B cell (primary cell): ENCODE measurements at regions of chr5 and their contacts with region 1.

Region 1: DNA sequence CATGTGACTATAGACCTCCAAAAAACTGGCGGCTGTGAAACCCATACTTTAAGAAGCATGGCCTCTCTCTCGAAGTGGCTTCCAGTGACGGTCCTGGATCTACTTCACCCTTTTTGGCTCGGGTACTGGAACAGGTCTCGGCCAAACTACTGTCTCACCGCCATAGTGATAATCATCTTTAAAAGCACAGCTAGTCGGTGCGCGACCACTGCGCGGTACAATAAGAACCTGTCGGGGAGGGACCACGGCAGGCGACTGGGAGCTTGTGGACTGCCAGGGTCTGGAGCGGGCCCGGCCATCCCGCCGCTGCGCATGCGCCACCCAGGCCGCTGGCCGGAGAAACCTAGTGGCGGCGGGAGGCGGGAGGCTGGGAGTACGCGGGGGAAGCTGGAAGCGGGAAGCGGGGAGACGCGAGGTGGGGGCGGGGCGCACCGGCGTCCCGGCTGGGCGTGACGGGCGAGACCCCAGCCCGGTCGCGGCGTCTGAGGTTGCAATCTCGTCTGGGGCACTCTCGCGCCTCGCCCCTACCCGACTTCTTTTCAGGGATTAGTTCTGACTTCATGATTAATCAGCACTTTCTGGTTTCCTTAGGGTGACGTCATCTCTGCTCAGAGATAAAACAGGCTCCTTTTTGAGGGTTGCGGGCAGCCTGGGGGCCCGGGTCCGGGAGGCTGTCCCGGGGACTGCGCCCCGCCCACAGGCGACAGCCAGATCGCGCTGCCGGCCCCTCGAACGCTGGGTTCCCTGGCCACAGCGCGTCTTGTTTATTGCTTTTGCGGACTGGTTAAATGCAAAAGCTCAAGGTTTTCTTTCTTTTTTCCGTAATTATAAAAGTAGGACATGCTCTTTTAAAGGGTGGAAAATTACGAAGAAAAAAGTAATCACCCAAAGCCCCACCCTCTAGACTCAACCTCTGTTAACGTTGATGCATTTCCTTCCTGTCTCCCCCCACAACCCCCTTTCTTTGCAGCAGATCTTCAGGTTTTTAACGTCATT is 266.8 kb downstream of the CWC27 start:
- DNase-seq: peak; percentile 83
- ATAC-seq: peak; percentile 81
- H3K4me3 ChIP-seq: peak overlapping the region; percentile 73 to 92 (median 85)
- H3K4me3 Mint-ChIP-seq: peak overlapping the region; percentile 88
- H3K27ac ChIP-seq: peak overlapping the region; percentile 78 to 89
- H3K27ac Mint-ChIP-seq: peak overlapping the region; percentile 88
- H3K4me1 ChIP-seq: peaks cover 25 to 30% of the 10 kb centered on the region in 2 donors
- H3K4me1 Mint-ChIP-seq: peaks cover 27% of the 10 kb centered on the region
- H3K27me3 ChIP-seq: no peaks in the 10 kb centered on the region
- H3K27me3 Mint-ChIP-seq: no peaks in the 10 kb centered on the region
- CTCF ChIP-seq: no peak

Region 2: GRCh38 chr5:64364426-64364825 is 671.1 kb before region 1 on chr5:
- CTCF ChIA-PET with region 1: no interaction called
- POLR2A ChIA-PET with region 1: no interaction called
- intact Hi-C with region 1: no loop called
- DNase-seq: no peak
- ATAC-seq: no peak
- H3K4me3 ChIP-seq: no peak overlapping the region
- H3K4me3 Mint-ChIP-seq: no peak overlapping the region
- H3K27ac ChIP-seq: no peak overlapping the region
- H3K27ac Mint-ChIP-seq: no peak overlapping the region
- H3K4me1 ChIP-seq: no peaks in the 10 kb centered on the region
- H3K4me1 Mint-ChIP-seq: no peaks in the 10 kb centered on the region
- H3K27me3 ChIP-seq: no peaks in the 10 kb centered on the region
- H3K27me3 Mint-ChIP-seq: no peaks in the 10 kb centered on the region
- CTCF ChIP-seq: no peak

Region 3: DNA sequence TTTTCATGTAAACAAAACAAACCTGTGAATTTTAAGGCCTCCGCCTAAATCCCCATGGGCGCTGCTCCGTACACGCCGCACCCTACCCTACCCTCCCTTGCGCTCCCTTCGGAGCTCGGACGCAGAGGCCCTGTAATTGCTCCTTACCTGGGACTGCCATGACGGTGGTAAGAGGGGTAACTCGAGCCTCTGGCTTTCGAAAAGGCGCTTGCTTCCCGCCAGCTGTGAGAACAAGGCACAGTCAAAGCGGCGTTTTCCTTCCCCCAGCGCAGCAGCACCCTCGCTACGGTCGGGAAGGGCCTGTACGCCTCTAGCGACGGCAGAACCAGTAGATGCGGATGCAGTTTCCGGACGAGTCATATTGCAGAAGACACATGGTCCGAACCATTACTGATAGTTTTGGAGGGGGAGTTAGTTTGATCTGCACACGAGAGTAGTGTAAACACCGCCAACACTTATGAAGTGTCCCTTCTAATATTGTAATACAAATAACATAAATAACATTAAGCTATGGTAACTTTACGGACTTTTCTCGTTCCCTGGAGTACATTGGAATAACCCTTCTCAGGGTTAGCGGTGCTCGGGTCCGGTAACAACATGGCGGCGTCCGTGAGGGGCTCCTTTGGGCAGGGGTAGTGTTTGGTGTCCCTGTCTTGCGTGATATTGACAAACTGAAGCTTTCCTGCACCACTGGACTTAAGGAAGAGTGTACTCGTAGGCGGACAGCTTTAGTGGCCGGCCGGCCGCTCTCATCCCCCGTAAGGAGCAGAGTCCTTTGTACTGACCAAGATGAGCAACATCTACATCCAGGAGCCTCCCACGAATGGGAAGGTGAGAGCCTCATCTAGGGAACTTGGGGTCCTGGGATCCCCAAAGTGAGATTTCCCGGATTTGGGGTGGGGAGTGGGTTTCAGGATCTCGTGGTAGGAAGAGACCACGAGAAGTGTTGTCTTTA is 266.9 kb before region 1 on chr5 and contains the starts of genes CWC27 and SREK1IP1:
- CTCF ChIA-PET with region 1: no interaction called
- POLR2A ChIA-PET with region 1: no interaction called
- intact Hi-C with region 1: loop called (anchors 10 kb)
- DNase-seq: peak; percentile 92
- ATAC-seq: peak; percentile 94
- H3K4me3 ChIP-seq: peak within 1 kb of the TSS; percentile 81 to 99 (median 96)
- H3K4me3 Mint-ChIP-seq: peak within 1 kb of the TSS; percentile 99
- H3K27ac ChIP-seq: peak within 1 kb of the TSS; percentile 73 to 84
- H3K27ac Mint-ChIP-seq: peak within 1 kb of the TSS; percentile 96
- H3K4me1 ChIP-seq: peaks cover 30 to 37% of the 10 kb centered on the region in 2 donors
- H3K4me1 Mint-ChIP-seq: peaks cover 55% of the 10 kb centered on the region
- H3K27me3 ChIP-seq: no peaks in the 10 kb centered on the region
- H3K27me3 Mint-ChIP-seq: no peaks in the 10 kb centered on the region
- CTCF ChIP-seq: no peak
- total RNA-seq, gene CWC27: 27.5 and 30.5 TPM in 2 replicates
- total RNA-seq, gene SREK1IP1: 21.0 and 25.5 TPM in 2 replicates

Region 4: DNA sequence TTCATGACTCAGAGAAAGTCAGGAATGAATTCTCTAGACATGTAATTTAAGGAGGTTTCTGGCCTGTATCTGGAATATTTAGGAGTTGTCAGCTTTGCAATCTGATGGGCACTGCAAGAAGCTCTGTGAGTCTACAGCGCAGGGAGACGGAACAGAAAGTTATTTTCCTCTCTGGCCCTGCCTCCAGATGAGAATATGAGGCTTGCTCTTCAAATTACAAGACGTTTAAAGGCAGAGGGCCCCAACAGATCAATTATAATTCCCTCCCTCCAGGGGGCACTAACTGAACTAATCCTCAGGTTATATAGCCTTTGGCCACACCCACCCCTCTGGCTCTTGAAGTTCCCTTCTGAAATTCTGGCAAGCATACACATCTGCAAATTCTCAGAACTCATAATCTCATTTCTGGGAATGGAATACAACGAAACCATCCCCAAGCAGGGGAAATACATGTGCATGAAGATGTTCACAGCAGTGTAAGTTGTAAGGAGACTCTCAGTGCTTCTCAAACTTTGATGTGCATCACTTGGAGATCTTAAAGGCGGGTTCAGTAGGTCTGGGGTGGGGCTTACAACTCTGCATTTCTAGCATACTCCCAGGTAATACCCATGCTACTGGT is 40.9 kb after region 1 on chr5:
- CTCF ChIA-PET with region 1: interaction called, 4 read pairs
- POLR2A ChIA-PET with region 1: no interaction called
- intact Hi-C with region 1: loop called (anchors 5 kb)
- DNase-seq: peak; percentile 73
- ATAC-seq: peak; percentile 93
- H3K4me3 ChIP-seq: no peak overlapping the region
- H3K4me3 Mint-ChIP-seq: no peak overlapping the region
- H3K27ac ChIP-seq: no peak overlapping the region
- H3K27ac Mint-ChIP-seq: no peak overlapping the region
- H3K4me1 ChIP-seq: peaks cover 10 to 15% of the 10 kb centered on the region in 2 donors
- H3K4me1 Mint-ChIP-seq: peaks cover 13% of the 10 kb centered on the region
- H3K27me3 ChIP-seq: no peaks in the 10 kb centered on the region
- H3K27me3 Mint-ChIP-seq: no peaks in the 10 kb centered on the region
- CTCF ChIP-seq: peak; percentile 56

Region 5: GRCh38 chr5:65102828-65103711 is 67.6 kb after region 1 on chr5:
- CTCF ChIA-PET with region 1: interaction called, 4 read pairs
- POLR2A ChIA-PET with region 1: interaction called, 7 read pairs
- intact Hi-C with region 1: loop called (anchors 5 kb)
- DNase-seq: peak; percentile 80
- ATAC-seq: peak; percentile 86
- H3K4me3 ChIP-seq: peak overlapping the region; percentile 40 to 76 (median 67)
- H3K4me3 Mint-ChIP-seq: peak overlapping the region; percentile 89
- H3K27ac ChIP-seq: peak overlapping the region; percentile 84 to 91
- H3K27ac Mint-ChIP-seq: peak overlapping the region; percentile 93
- H3K4me1 ChIP-seq: peaks cover 23% of the 10 kb centered on the region in 2 donors
- H3K4me1 Mint-ChIP-seq: peaks cover 23% of the 10 kb centered on the region
- H3K27me3 ChIP-seq: no peaks in the 10 kb centered on the region
- H3K27me3 Mint-ChIP-seq: no peaks in the 10 kb centered on the region
- CTCF ChIP-seq: no peak

Region 6: DNA sequence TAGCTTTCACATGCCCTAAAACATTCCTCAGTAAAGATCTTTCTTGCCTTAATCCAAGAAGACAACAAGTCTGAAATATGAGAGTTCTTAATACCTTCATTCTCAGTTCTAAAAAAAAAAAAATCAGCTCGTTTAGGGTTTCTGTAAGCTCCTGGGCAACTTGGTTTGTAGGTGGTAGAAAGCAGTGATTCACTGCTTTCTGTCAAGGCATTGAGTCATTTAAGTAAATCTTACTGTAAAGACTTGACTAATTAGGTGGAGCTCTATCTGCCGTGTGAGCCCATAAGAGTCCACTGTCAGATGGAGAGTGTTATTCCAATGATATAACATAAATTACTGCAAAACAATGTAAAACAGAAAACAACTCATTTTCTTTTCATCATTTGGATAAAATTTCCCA is 1504.6 kb after region 1 on chr5:
- CTCF ChIA-PET with region 1: no interaction called
- POLR2A ChIA-PET with region 1: no interaction called
- intact Hi-C with region 1: no loop called
- DNase-seq: no peak
- ATAC-seq: no peak
- H3K4me3 ChIP-seq: no peak overlapping the region
- H3K4me3 Mint-ChIP-seq: no peak overlapping the region
- H3K27ac ChIP-seq: no peak overlapping the region
- H3K27ac Mint-ChIP-seq: no peak overlapping the region
- H3K4me1 ChIP-seq: peaks cover 4 to 9% of the 10 kb centered on the region in 2 donors
- H3K4me1 Mint-ChIP-seq: peaks cover 29% of the 10 kb centered on the region
- H3K27me3 ChIP-seq: no peaks in the 10 kb centered on the region
- H3K27me3 Mint-ChIP-seq: no peaks in the 10 kb centered on the region
- CTCF ChIP-seq: no peak